CD4-positive, alpha-beta memory T cell (primary cell): ENCODE measurements at regions of chr11 and their contacts with region 1.

Region 1: GRCh38 chr11:10857709-10858438 is at the start of gene ZBED5:
- DNase-seq: peak; percentile 95 to 97 (median 97)
- H3K4me3 ChIP-seq: peak within 1 kb of the TSS; percentile 93 to 100
- H3K4me3 Mint-ChIP-seq: peak within 1 kb of the TSS; percentile 98 to 100 (median 99)
- H3K27ac ChIP-seq: peak within 1 kb of the TSS; percentile 93
- H3K27ac Mint-ChIP-seq: peak within 1 kb of the TSS; percentile 99 to 100 (median 99)
- H3K4me1 ChIP-seq: peaks cover 36% of the 10 kb centered on the region
- H3K4me1 Mint-ChIP-seq: peaks cover 26 to 63% (median 34%) of the 10 kb centered on the region in 4 donors
- H3K27me3 ChIP-seq: no peaks in the 10 kb centered on the region
- H3K27me3 Mint-ChIP-seq: no peaks in the 10 kb centered on the region
- total RNA-seq, gene ZBED5: 126 to 129 TPM

Region 2: GRCh38 chr11:10450464-10451425 is 407.1 kb before region 1 on chr11:
- CTCF ChIA-PET with region 1: no interaction called
- POLR2A ChIA-PET with region 1: interaction called, 7 read pairs
- intact Hi-C with region 1: loop called (anchors 5 kb)
- DNase-seq: peak; percentile 56 to 67 (median 58)
- H3K4me3 ChIP-seq: peak overlapping the region; percentile 39 to 66
- H3K4me3 Mint-ChIP-seq: peak overlapping the region; percentile 91 to 98 (median 94)
- H3K27ac ChIP-seq: peak overlapping the region; percentile 76
- H3K27ac Mint-ChIP-seq: peak overlapping the region; percentile 93 to 97 (median 96)
- H3K4me1 ChIP-seq: peaks cover 45% of the 10 kb centered on the region
- H3K4me1 Mint-ChIP-seq: peaks cover 41 to 62% (median 50%) of the 10 kb centered on the region in 4 donors
- H3K27me3 ChIP-seq: no peaks in the 10 kb centered on the region
- H3K27me3 Mint-ChIP-seq: peaks cover 0 to 2% of the 10 kb centered on the region in 2 donors

Region 3: GRCh38 chr11:10797531-10797930 is 60.3 kb before region 1 on chr11:
- CTCF ChIA-PET with region 1: interaction called, 17 read pairs
- POLR2A ChIA-PET with region 1: interaction called, 469 read pairs
- intact Hi-C with region 1: no loop called
- DNase-seq: no peak
- H3K4me3 ChIP-seq: no peak overlapping the region
- H3K4me3 Mint-ChIP-seq: peak overlapping the region in 1 of 8 donors; percentile 2
- H3K27ac ChIP-seq: no peak overlapping the region
- H3K27ac Mint-ChIP-seq: peak overlapping the region in 1 of 7 donors; percentile 71
- H3K4me1 ChIP-seq: peaks cover 75% of the 10 kb centered on the region
- H3K4me1 Mint-ChIP-seq: peaks cover 58 to 86% (median 72%) of the 10 kb centered on the region in 4 donors
- H3K27me3 ChIP-seq: no peaks in the 10 kb centered on the region
- H3K27me3 Mint-ChIP-seq: no peaks in the 10 kb centered on the region

Region 4: GRCh38 chr11:10878408-10879214 is 20.7 kb after region 1 on chr11:
- CTCF ChIA-PET with region 1: interaction called, 36 read pairs
- POLR2A ChIA-PET with region 1: interaction called, 26 read pairs
- intact Hi-C with region 1: loop called (anchors 1 kb)
- DNase-seq: peak; percentile 49 to 65 (median 62)
- H3K4me3 ChIP-seq: no peak overlapping the region
- H3K4me3 Mint-ChIP-seq: no peak overlapping the region
- H3K27ac ChIP-seq: no peak overlapping the region
- H3K27ac Mint-ChIP-seq: peak overlapping the region in 4 of 7 donors; percentile 37 to 84 (median 48)
- H3K4me1 ChIP-seq: no peaks in the 10 kb centered on the region
- H3K4me1 Mint-ChIP-seq: peaks cover 6 to 12% (median 8%) of the 10 kb centered on the region in 4 donors
- H3K27me3 ChIP-seq: no peaks in the 10 kb centered on the region
- H3K27me3 Mint-ChIP-seq: no peaks in the 10 kb centered on the region